ENCODE measurements at regions of chr9 and their contacts with region 1.

Region 1: GRCh38 chr9:109817846-109818472 is 38.0 kb downstream of the PALM2AKAP2 start:
- DNase-seq: no peak
- ATAC-seq: peak; percentile 81

Region 2: DNA sequence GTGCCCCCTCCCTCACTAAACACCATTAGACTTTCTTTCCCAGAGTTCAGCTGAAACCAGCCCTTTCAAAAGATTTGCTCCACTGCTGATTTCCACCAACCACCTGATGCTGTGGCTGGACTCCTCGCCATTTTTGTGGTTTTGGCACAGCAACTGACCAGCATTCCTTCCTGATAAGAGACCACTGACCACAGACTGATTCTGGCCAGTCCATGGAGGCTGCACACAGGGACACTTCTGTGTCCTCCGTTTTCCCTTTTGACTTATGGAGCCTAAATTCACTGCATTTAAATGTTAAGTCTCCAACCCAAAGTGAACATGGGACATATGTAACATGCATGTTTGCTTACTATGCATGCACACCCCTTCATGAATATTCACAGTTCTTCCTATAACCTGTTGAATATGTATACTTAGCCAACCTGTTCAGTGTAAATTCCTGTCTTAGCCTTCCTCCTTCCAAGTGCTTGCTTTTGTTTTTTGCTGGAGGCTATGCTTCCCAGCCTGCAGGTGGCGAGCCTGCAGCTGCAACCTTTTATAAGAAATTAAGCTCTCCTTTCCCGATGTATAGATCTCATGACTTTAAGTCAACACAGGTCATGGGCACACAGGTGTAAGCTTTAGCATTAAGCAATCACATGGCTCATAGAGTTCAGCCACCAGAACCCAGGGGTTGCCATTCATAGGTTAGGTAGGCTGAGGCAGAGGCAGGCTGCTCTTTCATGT is 1040.9 kb before region 1 on chr9:
- intact Hi-C with region 1: no loop called
- DNase-seq: no peak
- ATAC-seq: no peak

Region 3: GRCh38 chr9:109705515-109705914 is 112.4 kb before region 1 on chr9:
- intact Hi-C with region 1: loop called (anchors 2 kb)
- DNase-seq: no peak
- ATAC-seq: no peak

Region 4: GRCh38 chr9:109766336-109766735 is 51.6 kb before region 1 on chr9:
- intact Hi-C with region 1: no loop called
- DNase-seq: no peak
- ATAC-seq: no peak

Region 5: GRCh38 chr9:109779711-109780452 is 38.1 kb before region 1 on chr9 and contains the start of gene PALM2AKAP2:
- intact Hi-C with region 1: loop called (anchors 2 kb)
- DNase-seq: peak; percentile 87
- ATAC-seq: peak; percentile 88
- total RNA-seq, gene PALM2AKAP2: 90.1 TPM